Pancreas (tissue), 10 donors: ENCODE measurements at regions of chr11 and their contacts with region 1.

Region 1: DNA sequence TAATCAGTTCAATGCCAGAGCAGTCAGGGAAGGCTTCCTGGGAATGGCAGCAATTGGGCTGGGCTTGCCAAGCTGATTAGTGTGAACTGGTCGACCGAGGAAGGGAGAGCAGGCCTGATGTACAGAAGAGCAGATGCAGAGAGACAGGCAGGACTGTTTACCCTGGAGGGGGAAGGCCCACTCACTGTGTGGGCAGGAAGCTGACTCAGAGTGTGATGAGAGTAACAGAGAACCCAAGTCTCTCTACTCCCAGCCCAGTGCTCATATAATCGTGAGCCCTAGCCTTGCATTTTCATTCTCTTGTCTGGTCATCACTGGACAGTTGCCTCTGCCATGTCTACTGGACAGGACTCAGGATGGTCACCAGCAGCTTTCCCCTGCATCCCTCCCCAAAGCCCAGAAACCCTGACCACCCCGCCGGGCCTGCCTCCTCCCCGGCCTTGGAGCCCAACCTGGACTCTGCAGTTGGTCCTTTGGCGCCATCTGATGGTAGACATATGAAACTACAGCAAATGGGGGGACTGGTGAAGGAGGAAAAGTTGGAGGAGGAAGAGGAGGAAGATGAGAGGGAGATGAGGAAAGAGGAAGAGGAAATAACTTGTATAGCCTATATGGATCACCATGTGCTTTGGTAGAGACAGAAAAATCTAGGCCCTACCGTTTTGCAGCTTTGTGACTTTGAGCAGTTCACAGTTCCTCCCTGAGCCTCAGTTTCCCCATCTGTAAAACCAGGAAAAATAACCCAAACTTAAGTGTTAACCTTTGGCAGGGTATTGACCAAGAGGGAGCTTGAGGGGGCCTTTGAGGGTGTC is 43.4 kb upstream of the PRDM11 start:
- DNase-seq: peak in 5 of 6 donors; percentile 33 to 80 (median 58)
- ATAC-seq: peak; percentile 51 to 86 (median 82)
- H3K4me3 ChIP-seq: no peak overlapping the region
- H3K27ac ChIP-seq: no peak overlapping the region
- H3K4me1 ChIP-seq: no peaks in the 10 kb centered on the region
- H3K27me3 ChIP-seq: no peaks in the 10 kb centered on the region
- CTCF ChIP-seq: peak; percentile 73 to 87 (median 84)

Region 2: GRCh38 chr11:44927174-44927661 is 175.8 kb before region 1 on chr11:
- intact Hi-C with region 1: loop called in 2 of 3 experiments (anchors 5 kb)
- DNase-seq: peak; percentile 57 to 89 (median 76)
- ATAC-seq: peak; percentile 73 to 91 (median 86)
- H3K4me3 ChIP-seq: no peak overlapping the region
- H3K27ac ChIP-seq: no peak overlapping the region
- H3K4me1 ChIP-seq: no peaks in the 10 kb centered on the region
- H3K27me3 ChIP-seq: no peaks in the 10 kb centered on the region
- CTCF ChIP-seq: peak; percentile 85 to 92 (median 86)

Region 3: GRCh38 chr11:44936525-44936924 is 166.5 kb before region 1 on chr11:
- intact Hi-C with region 1: loop called in 2 of 3 experiments (anchors 5 kb)
- DNase-seq: peak; percentile 61 to 93 (median 86)
- ATAC-seq: peak; percentile 78 to 95 (median 88)
- H3K4me3 ChIP-seq: no peak overlapping the region
- H3K27ac ChIP-seq: no peak overlapping the region
- H3K4me1 ChIP-seq: no peaks in the 10 kb centered on the region
- H3K27me3 ChIP-seq: no peaks in the 10 kb centered on the region
- CTCF ChIP-seq: peak; percentile 72 to 97 (median 88)

Region 4: GRCh38 chr11:45285930-45286632 is 183.1 kb after region 1 on chr11 and contains the start of gene SYT13:
- intact Hi-C with region 1: loop called in 2 of 3 experiments (anchors 5 to 10 kb)
- DNase-seq: peak; percentile 58 to 87 (median 76)
- ATAC-seq: peak; percentile 94 to 98 (median 95)
- H3K4me3 ChIP-seq: peak within 1 kb of the TSS in 3 of 4 donors; percentile 16 to 45 (median 34)
- H3K27ac ChIP-seq: peak within 1 kb of the TSS in 1 of 4 donors; percentile 38
- H3K4me1 ChIP-seq: no peaks in the 10 kb centered on the region
- H3K27me3 ChIP-seq: no peaks in the 10 kb centered on the region
- CTCF ChIP-seq: no peak
- total RNA-seq, gene SYT13: 2.5 to 15.4 (median 5.8) TPM

Region 5: GRCh38 chr11:45294499-45294898 is 191.5 kb after region 1 on chr11:
- intact Hi-C with region 1: loop called in 2 of 3 experiments (anchors 5 to 10 kb)
- DNase-seq: no peak
- ATAC-seq: no peak
- H3K4me3 ChIP-seq: no peak overlapping the region
- H3K27ac ChIP-seq: no peak overlapping the region
- H3K4me1 ChIP-seq: no peaks in the 10 kb centered on the region
- H3K27me3 ChIP-seq: no peaks in the 10 kb centered on the region
- CTCF ChIP-seq: no peak

Region 6: GRCh38 chr11:45332276-45332934 is 229.4 kb after region 1 on chr11:
- intact Hi-C with region 1: loop called in 1 of 3 experiments (anchors 5 kb)
- DNase-seq: peak in 2 of 6 donors; percentile 22 to 61
- ATAC-seq: peak; percentile 80 to 93 (median 90)
- H3K4me3 ChIP-seq: peak overlapping the region in 1 of 4 donors; percentile 2
- H3K27ac ChIP-seq: no peak overlapping the region
- H3K4me1 ChIP-seq: peaks cover 0 to 4% (median 0%) of the 10 kb centered on the region in 3 donors
- H3K27me3 ChIP-seq: no peaks in the 10 kb centered on the region
- CTCF ChIP-seq: peak; percentile 70 to 88 (median 76)